ENCODE measurements at regions of chr3 and their contacts with region 1.

Region 1: DNA sequence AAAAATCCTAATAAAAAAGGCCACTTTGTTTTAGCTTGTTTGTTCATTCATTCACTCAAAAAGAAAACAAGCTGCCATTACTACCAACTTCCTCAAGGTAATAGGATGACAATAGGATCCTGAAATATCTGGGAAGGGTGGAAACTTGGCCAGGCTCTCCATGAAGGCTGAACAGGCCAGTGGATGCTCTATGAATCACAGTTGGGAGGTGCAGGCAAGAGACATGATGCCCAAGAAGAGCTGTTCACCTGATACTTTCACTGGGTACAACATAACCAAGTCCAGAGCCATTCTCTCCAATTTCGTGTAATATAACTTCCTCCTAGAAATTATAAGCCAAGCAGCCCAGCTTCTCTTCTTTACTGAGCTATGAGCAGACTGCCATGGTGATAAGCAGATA is 37.3 kb downstream of the NMNAT3 start:
- DNase-seq: no peak
- H3K27ac ChIP-seq: no peak overlapping the region
- CTCF ChIP-seq: no peak

Region 2: DNA sequence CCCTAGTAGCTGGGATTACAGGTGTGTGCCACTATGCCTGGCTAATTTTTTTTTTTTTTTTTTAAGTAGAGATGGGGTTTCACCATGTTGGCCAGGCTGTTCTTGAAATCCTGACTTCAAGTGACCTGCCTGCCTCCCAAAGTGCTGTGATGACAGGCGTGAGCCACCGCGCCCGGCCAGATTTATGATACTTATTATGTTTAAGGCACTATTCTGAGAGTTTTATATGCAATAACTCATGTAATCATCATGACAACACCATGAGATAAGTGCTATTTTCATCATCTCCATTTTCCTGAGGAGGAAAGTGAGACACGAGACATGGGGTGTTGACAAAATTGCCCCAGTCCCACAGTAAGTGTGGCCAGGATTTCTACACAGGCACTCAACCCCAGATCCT is 671.0 kb after region 1 on chr3:
- CTCF ChIA-PET with region 1: interaction called, 10 read pairs
- POLR2A ChIA-PET with region 1: no interaction called
- DNase-seq: no peak
- H3K27ac ChIP-seq: no peak overlapping the region
- CTCF ChIP-seq: no peak

Measured in RWPE1 (cell line).